Activated naive CD4-positive, alpha-beta T cell treated with anti-CD3 and anti-CD28 coated beads for 36 hours (primary cell): ENCODE measurements at regions of chrX and their contacts with region 1.

Region 1: DNA sequence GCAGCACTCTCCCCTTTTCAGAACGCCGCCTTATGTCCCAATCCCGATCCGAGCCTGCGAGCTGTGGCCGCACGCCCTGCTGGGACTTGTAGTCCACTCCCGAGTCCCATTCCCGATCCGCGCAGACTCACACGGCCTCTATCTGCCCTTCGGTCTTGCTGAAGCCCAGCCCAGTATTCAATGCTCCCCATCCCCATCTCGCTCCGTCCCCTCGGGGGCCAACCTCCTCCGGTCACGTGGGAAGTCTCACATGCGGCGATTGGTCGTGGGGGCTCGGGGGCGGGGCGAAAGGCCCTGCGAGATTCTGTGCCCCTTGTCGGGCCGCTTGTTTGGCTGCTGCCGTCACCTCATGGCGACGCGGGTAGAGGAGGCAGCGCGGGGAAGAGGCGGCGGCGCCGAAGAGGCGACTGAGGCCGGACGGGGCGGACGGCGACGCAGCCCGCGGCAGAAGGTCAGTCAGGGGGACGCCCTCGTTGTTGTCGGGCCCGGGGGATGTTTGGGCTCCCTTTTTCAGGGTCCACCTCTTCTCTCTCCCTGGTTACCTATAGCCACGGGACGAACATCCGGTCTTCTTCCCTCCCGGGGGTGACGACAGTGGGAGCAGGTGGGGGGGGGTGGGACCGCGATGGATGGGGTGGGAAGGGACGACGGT is at the start of gene TXLNG:
- DNase-seq: peak; percentile 95
- H3K4me3 Mint-ChIP-seq: peak within 1 kb of the TSS; percentile 83
- H3K27ac Mint-ChIP-seq: peak within 1 kb of the TSS; percentile 72
- H3K4me1 Mint-ChIP-seq: peaks cover 9% of the 10 kb centered on the region
- H3K27me3 Mint-ChIP-seq: no peaks in the 10 kb centered on the region
- total RNA-seq, gene TXLNG: 11.8 to 12.3 TPM

Region 2: GRCh38 chrX:15674841-15675489 is 1111.3 kb before region 1 on chrX:
- CTCF ChIA-PET with region 1: no interaction called
- intact Hi-C with region 1: loop called (anchors 5 kb)
- DNase-seq: peak; percentile 85
- H3K4me3 Mint-ChIP-seq: no peak overlapping the region
- H3K27ac Mint-ChIP-seq: no peak overlapping the region
- H3K4me1 Mint-ChIP-seq: peaks cover 21% of the 10 kb centered on the region
- H3K27me3 Mint-ChIP-seq: no peaks in the 10 kb centered on the region

Region 3: GRCh38 chrX:16484350-16484749 is 301.9 kb before region 1 on chrX:
- CTCF ChIA-PET with region 1: no interaction called
- intact Hi-C with region 1: loop called (anchors 1 kb)
- DNase-seq: peak; percentile 66
- H3K4me3 Mint-ChIP-seq: no peak overlapping the region
- H3K27ac Mint-ChIP-seq: no peak overlapping the region
- H3K4me1 Mint-ChIP-seq: peaks cover 34% of the 10 kb centered on the region
- H3K27me3 Mint-ChIP-seq: no peaks in the 10 kb centered on the region

Region 4: GRCh38 chrX:16719334-16720084 is 66.8 kb before region 1 on chrX and contains the start of gene SYAP1:
- CTCF ChIA-PET with region 1: no interaction called
- intact Hi-C with region 1: loop called (anchors 1 kb)
- DNase-seq: peak; percentile 93
- H3K4me3 Mint-ChIP-seq: peak within 1 kb of the TSS; percentile 89
- H3K27ac Mint-ChIP-seq: peak within 1 kb of the TSS; percentile 92
- H3K4me1 Mint-ChIP-seq: peaks cover 33% of the 10 kb centered on the region
- H3K27me3 Mint-ChIP-seq: no peaks in the 10 kb centered on the region
- total RNA-seq, gene SYAP1: 17.1 to 18.9 TPM

Region 5: GRCh38 chrX:16855363-16856075 is 69.3 kb after region 1 on chrX:
- CTCF ChIA-PET with region 1: no interaction called
- intact Hi-C with region 1: loop called (anchors 1 kb)
- DNase-seq: peak; percentile 31
- H3K4me3 Mint-ChIP-seq: peak overlapping the region; percentile 36
- H3K27ac Mint-ChIP-seq: peak overlapping the region; percentile 92
- H3K4me1 Mint-ChIP-seq: peaks cover 63% of the 10 kb centered on the region
- H3K27me3 Mint-ChIP-seq: no peaks in the 10 kb centered on the region

Region 6: GRCh38 chrX:16882702-16883486 is 96.6 kb after region 1 on chrX:
- CTCF ChIA-PET with region 1: interaction called, 4 read pairs
- intact Hi-C with region 1: loop called (anchors 1 kb)
- DNase-seq: peak; percentile 83
- H3K4me3 Mint-ChIP-seq: peak overlapping the region; percentile 73
- H3K27ac Mint-ChIP-seq: peak overlapping the region; percentile 72
- H3K4me1 Mint-ChIP-seq: no peaks in the 10 kb centered on the region
- H3K27me3 Mint-ChIP-seq: no peaks in the 10 kb centered on the region

Region 7: GRCh38 chrX:16946361-16946964 is 160.2 kb after region 1 on chrX and contains the start of gene REPS2:
- CTCF ChIA-PET with region 1: interaction called, 5 read pairs
- intact Hi-C with region 1: loop called (anchors 1 kb)
- DNase-seq: peak; percentile 83
- H3K4me3 Mint-ChIP-seq: peak within 1 kb of the TSS; percentile 71
- H3K27ac Mint-ChIP-seq: no peak within 1 kb of the TSS
- H3K4me1 Mint-ChIP-seq: peaks cover 2% of the 10 kb centered on the region
- H3K27me3 Mint-ChIP-seq: no peaks in the 10 kb centered on the region
- total RNA-seq, gene REPS2: not detected